PC-3 (cell line): ENCODE measurements at regions of chr1 and their contacts with region 1.

Region 1: GRCh38 chr1:21490774-21491553 is 18.3 kb upstream of the ALPL start:
- DNase-seq: peak; percentile 78
- ATAC-seq: peak; percentile 87
- H3K4me3 ChIP-seq: no peak overlapping the region
- H3K27ac ChIP-seq: no peak overlapping the region
- H3K4me1 ChIP-seq: no peaks in the 10 kb centered on the region
- H3K27me3 ChIP-seq: no peaks in the 10 kb centered on the region
- CTCF ChIP-seq: peak; percentile 82

Region 2: GRCh38 chr1:21439721-21440629 is 51.0 kb before region 1 on chr1 and contains the start of gene NBPF3:
- CTCF ChIA-PET with region 1: no interaction called
- POLR2A ChIA-PET with region 1: no interaction called
- intact Hi-C with region 1: loop called (anchors 2 kb)
- DNase-seq: peak; percentile 93
- ATAC-seq: peak; percentile 96
- H3K4me3 ChIP-seq: peak within 1 kb of the TSS; percentile 75
- H3K27ac ChIP-seq: 0 out of 2 replicates have a peak within 1 kb of the TSS, but pooled peaks have one; percentile 36
- H3K4me1 ChIP-seq: peaks cover 14% of the 10 kb centered on the region
- H3K27me3 ChIP-seq: no peaks in the 10 kb centered on the region
- CTCF ChIP-seq: no peak
- total RNA-seq, gene NBPF3: 26.0 and 35.5 TPM in 2 replicates